Activated CD4-positive, alpha-beta T cell treated with anti-CD3 and anti-CD28 coated beads, Interleukin-2, amount 10 ng/mL, durations not matched to agents 24 days and 14 days (primary cell): ENCODE measurements at regions of chr4 and their contacts with region 1.

Region 1: DNA sequence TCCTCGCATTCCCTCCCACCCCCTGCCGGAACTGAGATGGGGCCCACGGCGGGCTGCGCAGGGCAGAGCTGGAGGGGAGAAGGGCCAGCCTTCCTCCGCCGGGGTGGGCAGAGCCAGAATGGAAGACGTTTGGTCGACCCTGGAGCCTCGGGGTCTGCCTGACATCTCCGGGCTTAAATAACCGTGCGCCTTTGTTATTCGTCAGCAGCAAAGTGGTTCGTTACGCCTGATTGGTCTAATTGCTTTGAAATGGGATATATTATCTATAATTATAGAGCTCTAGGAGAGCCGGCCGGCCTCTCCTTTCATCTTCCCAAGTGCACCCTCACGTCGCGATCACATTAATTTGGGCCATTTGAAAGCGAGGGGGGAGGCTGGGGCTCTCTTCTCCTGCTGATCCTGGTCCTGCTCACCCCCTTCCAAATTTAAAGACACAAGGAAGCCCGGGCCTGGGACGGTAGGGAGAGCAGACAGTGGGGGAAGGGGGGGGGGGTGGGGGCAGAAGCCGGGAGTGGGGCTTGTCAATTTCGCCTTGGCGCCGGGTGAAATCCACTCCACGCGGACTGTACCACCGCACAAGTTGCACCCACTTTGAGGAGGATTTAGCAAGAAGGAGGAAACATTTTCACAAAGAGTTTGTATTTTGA is 4.7 kb upstream of the MSX1 start:
- DNase-seq: no peak
- H3K4me3 Mint-ChIP-seq: no peak overlapping the region
- H3K27ac Mint-ChIP-seq: no peak overlapping the region
- H3K4me1 Mint-ChIP-seq: peaks cover 14% of the 10 kb centered on the region
- H3K27me3 Mint-ChIP-seq: peaks cover 63% of the 10 kb centered on the region

Region 2: GRCh38 chr4:4443821-4444220 is 411.0 kb before region 1 on chr4:
- intact Hi-C with region 1: no loop called
- DNase-seq: no peak
- H3K4me3 Mint-ChIP-seq: no peak overlapping the region
- H3K27ac Mint-ChIP-seq: no peak overlapping the region
- H3K4me1 Mint-ChIP-seq: peaks cover 6% of the 10 kb centered on the region
- H3K27me3 Mint-ChIP-seq: no peaks in the 10 kb centered on the region

Region 3: DNA sequence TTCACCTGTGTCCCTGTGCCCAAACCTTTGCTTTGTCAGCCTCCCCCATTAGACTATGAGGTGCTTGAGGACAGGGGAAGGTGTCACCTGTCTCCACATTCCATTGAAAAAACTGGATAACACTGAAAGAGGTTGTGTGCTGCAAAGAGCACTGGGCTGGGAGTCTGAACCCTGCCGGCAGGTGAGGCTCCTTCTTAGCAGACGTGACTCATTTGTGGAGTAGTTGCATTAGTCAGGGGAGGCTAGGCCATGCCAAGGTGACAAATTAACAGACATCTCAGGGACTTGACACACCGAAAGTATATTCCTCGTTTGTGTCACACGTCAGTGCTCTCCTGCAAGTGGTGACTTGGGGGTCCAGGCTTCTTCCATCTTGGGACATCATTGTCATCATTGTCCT is 217.1 kb before region 1 on chr4:
- intact Hi-C with region 1: no loop called
- DNase-seq: no peak
- H3K4me3 Mint-ChIP-seq: no peak overlapping the region
- H3K27ac Mint-ChIP-seq: no peak overlapping the region
- H3K4me1 Mint-ChIP-seq: peaks cover 2% of the 10 kb centered on the region
- H3K27me3 Mint-ChIP-seq: no peaks in the 10 kb centered on the region

Region 4: DNA sequence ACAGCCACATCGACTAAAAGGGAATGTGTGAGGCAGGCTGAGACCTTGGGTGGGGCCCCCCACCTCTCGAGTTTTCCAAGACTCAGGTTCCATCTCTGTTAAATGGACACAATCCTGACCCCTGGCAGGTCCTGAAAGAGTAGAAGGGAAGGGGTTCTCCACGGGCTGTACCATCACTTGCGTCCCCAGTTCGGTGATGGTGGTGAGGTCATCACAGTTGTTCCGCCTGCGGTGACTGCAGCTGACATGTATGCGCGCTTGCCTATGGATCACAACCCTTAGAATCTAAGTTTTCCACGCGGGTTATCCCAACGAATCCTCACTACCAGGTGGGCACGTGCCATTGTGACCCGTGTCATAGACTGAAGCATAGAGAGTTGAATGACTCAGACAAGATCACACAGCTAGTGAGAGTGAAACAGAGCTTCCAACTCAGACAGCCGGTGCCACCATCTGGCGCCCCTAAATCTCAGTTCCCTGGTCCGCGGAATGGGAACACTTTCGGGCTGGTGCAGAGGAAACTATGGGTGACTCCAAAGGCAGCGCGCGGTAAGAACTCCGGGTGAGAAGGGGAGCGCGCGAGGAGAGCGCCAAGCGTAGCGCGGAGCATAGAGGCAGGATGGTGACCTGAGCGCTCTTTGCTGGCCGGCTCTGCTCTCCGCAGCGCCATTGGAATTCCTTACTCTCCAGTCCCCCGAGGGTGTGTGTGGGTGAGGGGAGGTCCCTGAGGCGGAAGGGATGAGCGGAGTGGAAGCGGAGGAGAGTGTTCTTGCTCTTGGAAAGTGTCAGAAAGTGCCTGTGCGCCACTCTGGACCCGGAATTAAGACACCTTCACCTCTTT is 15.2 kb after region 1 on chr4:
- intact Hi-C with region 1: loop called (anchors 1 kb)
- DNase-seq: no peak
- H3K4me3 Mint-ChIP-seq: no peak overlapping the region
- H3K27ac Mint-ChIP-seq: no peak overlapping the region
- H3K4me1 Mint-ChIP-seq: peaks cover 2% of the 10 kb centered on the region
- H3K27me3 Mint-ChIP-seq: peaks cover 66% of the 10 kb centered on the region

Region 5: DNA sequence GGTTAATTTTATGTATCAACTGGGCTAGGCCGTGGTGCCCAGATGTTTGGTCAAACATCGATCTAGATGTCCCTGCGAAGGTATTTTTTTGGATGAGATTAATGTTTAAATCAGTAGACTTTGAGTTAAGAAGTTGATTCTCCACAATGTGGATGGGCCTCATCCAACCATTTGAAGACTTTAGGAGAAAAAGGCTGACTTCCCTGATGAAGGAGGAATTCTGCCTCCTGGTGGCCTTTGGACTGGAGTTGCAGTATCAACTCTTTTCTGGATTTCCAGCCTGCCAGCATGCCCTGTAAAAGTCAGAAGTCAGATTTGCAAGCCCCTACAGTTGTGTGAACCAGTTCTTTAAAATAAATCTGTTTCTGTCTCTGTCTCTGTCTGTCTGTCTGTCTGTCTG is 288.0 kb after region 1 on chr4:
- intact Hi-C with region 1: no loop called
- DNase-seq: no peak
- H3K4me3 Mint-ChIP-seq: no peak overlapping the region
- H3K27ac Mint-ChIP-seq: no peak overlapping the region
- H3K4me1 Mint-ChIP-seq: no peaks in the 10 kb centered on the region
- H3K27me3 Mint-ChIP-seq: no peaks in the 10 kb centered on the region